GM13977 (cell line): ENCODE measurements at regions of chr6 and their contacts with region 1.

Region 1: DNA sequence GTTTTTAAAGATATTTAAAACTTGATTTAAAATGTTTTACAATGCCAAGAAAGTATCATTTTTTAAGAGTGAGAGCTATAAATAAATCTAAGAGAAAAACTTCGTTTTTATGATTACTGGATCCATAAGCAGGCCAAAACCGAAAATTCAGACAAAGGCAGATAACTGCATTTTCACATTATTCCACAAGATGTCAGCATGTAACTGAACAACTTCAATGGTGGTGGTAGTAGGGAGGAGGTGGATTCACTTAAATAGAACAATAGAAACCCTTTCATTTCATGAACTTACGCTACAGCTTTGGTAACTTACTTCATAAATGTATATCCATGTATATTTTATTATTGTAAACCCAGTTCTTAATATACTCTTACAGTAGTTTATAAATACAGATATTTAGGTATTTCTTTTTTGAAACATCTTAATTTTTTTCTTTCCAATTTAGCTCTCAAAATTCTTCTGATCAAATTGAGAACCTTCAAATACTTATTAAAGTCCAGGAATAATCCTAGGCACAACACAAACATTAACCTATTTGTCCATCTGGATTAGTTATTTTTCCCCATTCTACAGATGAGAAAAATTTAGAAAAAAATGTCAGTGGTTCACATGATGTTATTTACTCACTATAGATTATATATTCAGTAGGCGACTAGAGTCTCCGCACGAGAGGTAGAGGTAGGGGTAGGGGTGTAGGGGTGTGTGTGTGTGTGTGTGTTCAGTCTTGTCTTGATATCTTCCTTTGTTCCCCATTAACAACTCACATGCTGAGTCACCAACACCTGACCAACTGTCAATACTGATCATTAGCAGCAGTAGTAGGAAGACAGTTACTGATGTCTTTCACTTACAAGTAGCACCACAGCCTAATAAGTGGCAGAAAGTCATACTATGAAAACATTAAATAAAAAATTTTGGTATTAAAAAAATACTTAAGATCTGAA is 111.5 kb downstream of the ARHGAP18 start:
- DNase-seq: peak; percentile 46
- CTCF ChIP-seq: peak; percentile 81

Region 2: GRCh38 chr6:128754658-128755256 is 843.8 kb before region 1 on chr6:
- in situ Hi-C with region 1: no loop called
- DNase-seq: peak; percentile 62
- CTCF ChIP-seq: no peak

Region 3: DNA sequence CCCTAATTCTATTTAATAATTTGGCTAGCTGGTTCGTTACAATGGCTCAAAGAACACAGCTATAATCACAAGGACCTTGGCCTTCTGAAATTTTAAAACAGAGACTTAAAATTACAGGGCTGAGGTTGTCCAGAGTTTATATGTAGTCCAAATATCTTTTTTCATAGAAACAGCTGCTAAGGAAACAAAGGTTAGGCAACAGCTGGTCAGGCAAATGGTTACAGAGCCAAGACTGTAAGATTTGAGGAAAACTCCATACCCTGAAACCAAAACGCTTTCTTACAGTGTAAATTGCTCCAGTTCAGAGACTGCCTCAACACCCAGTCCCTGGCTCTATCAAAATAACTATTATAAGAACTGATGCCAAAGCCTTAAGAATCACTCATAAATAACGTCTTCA is 121.2 kb after region 1 on chr6:
- in situ Hi-C with region 1: loop called (anchors 10 kb)
- DNase-seq: no peak
- CTCF ChIP-seq: no peak

Region 4: GRCh38 chr6:130293800-130294199 is 695.3 kb after region 1 on chr6:
- in situ Hi-C with region 1: no loop called
- DNase-seq: peak; percentile 51
- CTCF ChIP-seq: peak; percentile 67